HepG2 (cell line): ENCODE measurements at regions of chr3 and their contacts with region 1.

Region 1: GRCh38 chr3:49813497-49814174 is at the start of gene UBA7:
- DNase-seq: peak; percentile 74
- ATAC-seq: peak; percentile 95
- H3K4me3 ChIP-seq: peak within 1 kb of the TSS; percentile 48 to 67 (median 56)
- H3K27ac ChIP-seq: peak within 1 kb of the TSS; percentile 64
- H3K4me1 ChIP-seq: peaks cover 17% of the 10 kb centered on the region
- H3K27me3 ChIP-seq: no peaks in the 10 kb centered on the region
- CTCF ChIP-seq: 0 out of 2 replicates have a peak, but pooled peaks have one; percentile 9
- EP300 ChIP-seq: no peak
- POLR2A ChIP-seq: peak; percentile 34 to 45; a peak in 1 of 4 replicates
- RAD21 ChIP-seq: no peak
- total RNA-seq, gene UBA7: 5.8 and 9.5 TPM in 2 replicates

Region 2: DNA sequence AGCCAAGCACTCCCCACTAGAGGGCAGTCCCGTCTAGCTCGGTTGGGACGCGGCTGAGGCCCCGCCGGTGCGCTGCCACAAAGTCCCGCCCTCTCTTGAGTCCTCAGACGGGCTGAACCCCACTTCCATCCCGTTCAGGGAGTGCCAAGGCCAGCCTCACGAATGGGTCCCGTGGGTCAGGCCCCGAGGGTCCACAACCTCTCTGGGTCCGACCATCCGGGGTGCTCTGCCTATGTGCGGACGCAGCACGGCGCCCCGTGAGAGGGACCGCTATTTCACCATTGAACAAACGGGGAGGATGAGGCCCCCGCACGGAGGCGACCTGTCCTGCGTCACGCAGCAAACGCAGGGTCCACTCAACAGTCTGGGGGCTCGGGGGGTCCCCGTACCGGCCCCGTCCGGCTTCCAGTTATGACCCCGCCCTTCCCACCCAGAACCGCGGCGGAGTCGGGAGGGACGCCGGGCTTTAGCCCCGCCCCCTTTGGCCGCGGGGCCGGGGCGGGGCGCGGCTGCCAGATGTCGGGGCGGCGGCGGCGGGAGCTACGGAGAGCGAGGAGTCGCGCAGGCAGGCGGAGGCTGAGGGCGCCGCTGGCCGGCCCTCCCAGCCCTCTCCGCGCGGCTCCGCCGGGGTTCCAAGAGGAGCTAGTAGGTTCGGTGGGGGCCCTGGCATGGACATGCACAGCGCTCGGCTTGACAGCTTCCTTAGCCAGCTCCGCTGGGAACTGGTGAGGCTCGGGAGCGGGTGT is 10.7 kb before region 1 on chr3 and contains the start of gene INKA1:
- CTCF ChIA-PET with region 1: no interaction called
- POLR2A ChIA-PET with region 1: interaction called, 15 read pairs
- in situ Hi-C with region 1: no loop called
- intact Hi-C with region 1: no loop called
- DNase-seq: peak; percentile 75
- ATAC-seq: peak; percentile 77
- H3K4me3 ChIP-seq: peak within 1 kb of the TSS; percentile 73 to 89 (median 85)
- H3K27ac ChIP-seq: no peak within 1 kb of the TSS
- H3K4me1 ChIP-seq: peaks cover 78% of the 10 kb centered on the region
- H3K27me3 ChIP-seq: peaks cover 0 to 12% of the 10 kb centered on the region in 2 experiments; a peak in 3 of 5 replicates
- CTCF ChIP-seq: peak; percentile 100
- EP300 ChIP-seq: no peak
- POLR2A ChIP-seq: no peak
- RAD21 ChIP-seq: peak; percentile 98
- total RNA-seq, gene INKA1: 0.22 TPM in 1 of 2 replicates, not detected in the other